ENCODE measurements at regions of chr12 and their contacts with region 1.

Region 1: GRCh38 chr12:131830335-131830913 is 2.2 kb downstream of the MMP17 start:
- DNase-seq: peak; percentile 14
- H3K4me3 ChIP-seq: no peak overlapping the region
- H3K27ac ChIP-seq: no peak overlapping the region
- H3K4me1 ChIP-seq: no peaks in the 10 kb centered on the region
- CTCF ChIP-seq: peak; percentile 47

Region 2: DNA sequence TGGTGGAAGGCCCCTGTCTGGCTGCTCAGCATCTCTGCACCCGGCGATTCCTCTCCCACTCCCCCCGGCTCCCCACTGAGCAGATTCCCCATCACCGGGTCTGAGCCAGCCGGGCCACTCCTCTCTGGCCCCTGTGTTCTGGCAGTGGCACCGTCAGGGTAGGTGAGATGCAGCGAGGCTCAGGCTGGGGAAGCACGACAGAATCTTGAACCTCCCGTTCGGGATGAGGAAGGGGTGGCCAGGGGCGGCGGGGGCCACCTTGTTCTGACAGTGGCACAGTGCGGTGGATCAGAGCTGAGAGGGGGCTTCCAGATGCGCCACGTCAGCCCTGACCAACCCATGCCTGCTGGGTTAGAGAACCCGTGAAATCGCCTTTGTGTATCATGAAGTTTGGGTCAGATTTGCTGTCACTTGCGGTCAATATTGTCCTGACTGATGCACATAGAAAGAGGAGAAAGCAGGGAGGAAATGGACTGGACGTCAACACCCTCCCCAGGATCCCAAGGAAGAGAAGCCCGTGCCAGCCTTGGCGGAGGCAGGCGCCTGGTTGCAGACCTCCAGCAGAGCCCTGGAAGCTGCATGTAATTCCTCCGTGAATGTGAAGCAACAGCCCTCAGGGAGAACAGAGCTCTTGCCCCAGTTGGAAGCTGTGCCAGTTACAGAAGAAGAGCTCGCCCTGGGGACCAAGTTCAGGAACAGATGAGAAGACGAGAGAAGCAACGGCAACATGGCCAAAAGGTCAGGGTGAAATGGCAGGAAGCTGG is 256.6 kb before region 1 on chr12:
- CTCF ChIA-PET with region 1: no interaction called
- POLR2A ChIA-PET with region 1: no interaction called
- intact Hi-C with region 1: no loop called
- DNase-seq: no peak
- H3K4me3 ChIP-seq: no peak overlapping the region
- H3K27ac ChIP-seq: no peak overlapping the region
- H3K4me1 ChIP-seq: no peaks in the 10 kb centered on the region
- CTCF ChIP-seq: no peak

Region 3: DNA sequence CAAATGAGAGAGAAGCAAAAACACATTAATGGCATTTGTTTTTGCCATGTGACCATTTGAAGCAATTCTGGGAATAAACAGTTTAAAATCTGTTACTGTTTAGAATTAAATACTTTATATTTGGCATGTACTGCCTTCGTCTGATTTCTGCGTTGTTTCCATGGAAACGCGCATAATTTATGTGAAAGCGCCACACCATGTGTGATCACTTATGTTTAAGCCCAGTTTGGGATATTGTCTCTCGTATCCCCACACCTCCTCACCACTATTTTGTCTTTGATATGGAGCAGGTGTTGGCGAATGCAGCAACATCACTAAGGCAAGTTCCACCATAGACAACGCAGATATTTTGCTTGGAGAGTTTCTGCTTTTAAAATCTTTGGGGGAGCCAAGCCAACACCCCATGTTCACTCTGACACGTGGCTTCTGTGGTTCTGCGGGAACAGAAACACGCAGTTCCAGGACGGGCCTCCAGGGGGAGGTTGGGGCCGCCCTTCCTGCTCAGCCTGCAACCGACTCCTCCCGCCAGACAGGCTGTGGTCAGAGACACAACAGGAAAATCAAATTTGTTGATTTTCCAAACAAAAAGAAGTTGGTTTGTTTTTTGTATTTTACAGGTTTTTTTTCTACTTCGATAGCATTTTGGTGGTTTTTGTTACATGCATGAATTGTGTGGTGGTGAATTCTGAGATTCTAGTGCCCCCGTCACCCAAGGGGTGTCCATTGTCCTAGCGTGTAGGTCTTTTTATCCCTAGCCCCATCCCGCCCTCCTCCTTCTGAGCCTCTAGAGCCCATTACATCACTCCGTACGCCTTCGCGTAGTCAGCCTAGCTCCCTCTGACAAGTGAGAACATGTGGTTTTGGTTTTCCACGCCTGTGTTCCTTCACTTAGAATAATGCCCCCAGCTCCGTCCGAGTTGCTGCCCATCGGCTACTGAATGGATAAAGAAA is 221.4 kb before region 1 on chr12:
- CTCF ChIA-PET with region 1: no interaction called
- POLR2A ChIA-PET with region 1: no interaction called
- intact Hi-C with region 1: loop called (anchors 5 kb)
- DNase-seq: peak; percentile 50
- H3K4me3 ChIP-seq: no peak overlapping the region
- H3K27ac ChIP-seq: no peak overlapping the region
- H3K4me1 ChIP-seq: peaks cover 7% of the 10 kb centered on the region
- CTCF ChIP-seq: peak; percentile 84